Activated CD8-positive, alpha-beta T cell treated with anti-CD3 and anti-CD28 coated beads for 36 hours (primary cell): ENCODE measurements at regions of chr5 and their contacts with region 1.

Region 1: GRCh38 chr5:172450861-172451695 is 3.2 kb downstream of the SH3PXD2B start:
- DNase-seq: peak; percentile 51
- ATAC-seq: peak; percentile 60
- H3K4me3 Mint-ChIP-seq: no peak overlapping the region
- H3K27ac Mint-ChIP-seq: no peak overlapping the region
- H3K4me1 Mint-ChIP-seq: peaks cover 9% of the 10 kb centered on the region
- H3K27me3 Mint-ChIP-seq: peaks cover 40% of the 10 kb centered on the region
- CTCF ChIP-seq: peak; percentile 79

Region 2: DNA sequence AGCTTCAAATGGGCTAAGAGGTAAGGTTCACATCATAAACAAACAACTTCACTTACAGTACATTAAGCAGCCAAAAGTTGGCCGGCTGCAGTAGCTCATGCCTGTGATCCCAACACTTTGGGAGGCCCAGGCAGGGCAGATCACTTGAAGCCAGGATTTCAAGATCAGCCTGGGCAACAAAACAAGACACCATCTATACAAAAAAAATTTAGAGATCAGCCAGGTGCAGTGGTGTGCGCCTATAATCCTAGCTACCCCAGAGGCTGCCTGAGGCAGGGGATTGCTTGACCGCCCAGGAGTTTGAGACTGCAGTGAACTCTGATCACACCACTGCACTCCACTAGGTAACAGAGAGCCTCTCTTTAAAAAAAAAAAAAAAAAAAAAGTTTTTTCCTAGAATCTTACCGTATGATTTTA is 184.4 kb before region 1 on chr5:
- CTCF ChIA-PET with region 1: no interaction called
- POLR2A ChIA-PET with region 1: no interaction called
- intact Hi-C with region 1: no loop called
- DNase-seq: no peak
- ATAC-seq: no peak
- H3K4me3 Mint-ChIP-seq: no peak overlapping the region
- H3K27ac Mint-ChIP-seq: no peak overlapping the region
- H3K4me1 Mint-ChIP-seq: peaks cover 12% of the 10 kb centered on the region
- H3K27me3 Mint-ChIP-seq: no peaks in the 10 kb centered on the region
- CTCF ChIP-seq: no peak

Region 3: DNA sequence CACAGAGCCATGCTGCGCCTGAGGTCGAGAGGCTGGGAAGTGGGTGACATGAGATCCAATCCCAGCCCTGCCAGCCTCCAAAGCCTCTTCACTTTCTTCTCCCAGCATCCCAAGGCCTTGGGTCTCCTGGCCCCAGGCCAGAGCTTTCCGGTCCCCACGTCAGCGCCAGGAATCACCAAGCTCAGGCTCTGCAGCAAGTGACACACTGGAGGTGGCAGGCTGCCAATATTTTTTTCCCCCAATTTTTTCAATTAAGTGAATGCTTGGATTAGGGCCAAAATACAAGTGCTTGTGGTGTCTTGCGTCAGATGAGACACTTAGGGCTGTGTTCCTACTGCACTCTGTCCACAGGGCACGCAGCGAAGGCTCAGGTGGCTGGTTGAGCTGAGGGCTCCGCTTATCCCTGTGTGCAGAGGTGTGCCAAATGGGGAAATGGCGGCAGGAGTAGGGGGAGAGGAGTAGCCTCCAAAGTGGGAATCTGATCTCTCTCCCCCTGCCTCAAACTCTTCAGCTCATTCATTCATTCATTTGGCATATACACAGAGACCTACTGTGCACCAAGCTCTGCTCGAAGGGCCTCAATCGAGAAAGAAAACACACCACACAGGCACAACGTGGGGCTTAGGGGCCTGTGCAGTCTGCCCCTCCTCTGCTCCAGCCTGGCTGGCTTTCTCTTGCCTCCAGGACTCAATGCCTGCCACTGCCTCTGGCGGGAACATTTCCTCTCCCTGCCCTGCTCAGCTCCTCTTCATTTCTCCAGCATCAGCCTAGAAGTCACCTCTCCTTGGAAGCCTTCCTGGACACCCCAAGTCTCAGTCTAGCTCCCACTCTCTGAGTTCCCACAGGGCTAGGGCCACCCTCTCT is 13.4 kb before region 1 on chr5:
- CTCF ChIA-PET with region 1: interaction called, 14 read pairs
- POLR2A ChIA-PET with region 1: interaction called, 3 read pairs
- intact Hi-C with region 1: no loop called
- DNase-seq: no peak
- ATAC-seq: no peak
- H3K4me3 Mint-ChIP-seq: no peak overlapping the region
- H3K27ac Mint-ChIP-seq: no peak overlapping the region
- H3K4me1 Mint-ChIP-seq: no peaks in the 10 kb centered on the region
- H3K27me3 Mint-ChIP-seq: peaks cover 8% of the 10 kb centered on the region
- CTCF ChIP-seq: no peak

Region 4: DNA sequence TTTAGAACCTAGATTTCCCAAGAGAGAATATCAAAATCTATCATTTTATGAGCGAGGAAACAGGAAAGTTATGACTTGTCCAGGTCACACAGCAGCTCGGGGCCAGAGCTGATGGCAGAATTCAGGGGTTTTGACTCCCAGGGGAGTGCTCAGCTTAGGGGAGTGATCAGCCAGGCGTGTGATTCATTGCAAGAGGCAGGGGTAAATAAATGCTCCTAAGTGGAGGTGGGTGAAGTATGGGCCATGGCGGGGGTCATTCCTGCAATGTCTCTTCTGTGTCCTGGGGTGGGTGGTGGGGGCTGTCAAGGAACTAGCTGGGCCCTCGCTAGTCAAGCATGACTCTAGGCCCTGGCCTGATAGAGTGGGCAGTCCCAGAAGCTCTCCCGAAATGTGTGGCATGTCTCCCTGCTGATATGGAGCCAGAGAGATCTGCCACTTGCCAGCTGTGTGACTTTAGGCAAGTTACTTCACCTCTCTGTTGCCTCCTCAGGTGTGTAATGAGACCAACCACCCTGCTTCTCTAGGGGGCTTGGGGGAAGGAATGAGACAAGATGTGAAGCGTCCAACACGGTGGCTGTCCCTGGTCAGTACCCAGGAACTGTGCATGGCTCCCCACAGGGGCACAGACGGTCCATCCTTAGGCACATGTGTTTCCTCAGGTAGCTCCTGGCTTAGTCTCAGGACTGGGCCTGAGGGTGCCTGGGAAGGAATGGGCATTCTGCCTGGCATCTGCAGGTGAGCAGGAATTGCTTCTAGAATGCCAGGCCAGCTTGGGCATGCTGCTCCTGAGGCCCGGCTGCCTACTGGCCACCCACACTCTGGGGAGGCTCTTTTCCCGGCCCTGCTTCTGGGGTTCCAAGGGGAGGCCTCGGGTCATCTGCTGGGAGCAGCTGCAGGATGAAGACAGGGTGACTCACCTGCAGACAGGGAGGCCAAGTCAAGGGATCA is 39.7 kb after region 1 on chr5:
- CTCF ChIA-PET with region 1: no interaction called
- POLR2A ChIA-PET with region 1: no interaction called
- intact Hi-C with region 1: no loop called
- DNase-seq: no peak
- ATAC-seq: no peak
- H3K4me3 Mint-ChIP-seq: no peak overlapping the region
- H3K27ac Mint-ChIP-seq: no peak overlapping the region
- H3K4me1 Mint-ChIP-seq: no peaks in the 10 kb centered on the region
- H3K27me3 Mint-ChIP-seq: peaks cover 2% of the 10 kb centered on the region
- CTCF ChIP-seq: no peak

Region 5: DNA sequence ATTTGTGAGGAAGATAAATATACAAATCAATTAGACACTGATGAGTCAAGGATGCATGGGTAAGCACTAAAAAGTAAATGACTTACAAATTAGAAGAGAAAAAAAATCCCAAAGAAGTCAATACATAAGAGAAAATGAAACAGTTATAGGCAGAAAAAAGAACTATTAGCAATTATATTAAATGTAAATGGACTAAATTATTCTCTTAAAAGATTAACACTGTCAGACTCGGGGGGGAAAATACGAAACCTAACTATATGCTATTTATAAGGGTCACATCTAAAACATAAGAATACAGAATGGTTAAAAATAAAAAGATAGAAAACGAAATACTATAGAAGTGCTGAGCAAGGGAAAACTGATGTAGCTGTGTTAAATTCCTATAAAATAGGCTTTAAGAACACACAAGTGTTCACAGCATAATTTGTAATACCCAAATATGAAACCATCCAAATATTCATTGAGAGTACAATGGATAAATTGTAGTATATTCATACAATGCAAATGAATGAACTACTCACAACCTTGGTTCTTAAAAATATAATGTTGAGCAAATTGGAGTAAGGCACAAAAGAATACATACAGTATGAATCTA is 70.4 kb after region 1 on chr5:
- CTCF ChIA-PET with region 1: no interaction called
- POLR2A ChIA-PET with region 1: no interaction called
- intact Hi-C with region 1: no loop called
- DNase-seq: no peak
- ATAC-seq: no peak
- H3K4me3 Mint-ChIP-seq: no peak overlapping the region
- H3K27ac Mint-ChIP-seq: no peak overlapping the region
- H3K4me1 Mint-ChIP-seq: no peaks in the 10 kb centered on the region
- H3K27me3 Mint-ChIP-seq: peaks cover 3% of the 10 kb centered on the region
- CTCF ChIP-seq: no peak